Right cardiac atrium (tissue), 5 donors: ENCODE measurements at regions of chr19 and their contacts with region 1.

Region 1: GRCh38 chr19:850221-850978 is 1.7 kb upstream of the ELANE start:
- DNase-seq: peak; percentile 96 to 98 (median 97)
- ATAC-seq: peak; percentile 90 to 91
- H3K4me3 ChIP-seq: no peak overlapping the region
- H3K27ac ChIP-seq: peak overlapping the region; percentile 34
- H3K4me1 ChIP-seq: no peaks in the 10 kb centered on the region
- H3K27me3 ChIP-seq: no peaks in the 10 kb centered on the region

Region 2: DNA sequence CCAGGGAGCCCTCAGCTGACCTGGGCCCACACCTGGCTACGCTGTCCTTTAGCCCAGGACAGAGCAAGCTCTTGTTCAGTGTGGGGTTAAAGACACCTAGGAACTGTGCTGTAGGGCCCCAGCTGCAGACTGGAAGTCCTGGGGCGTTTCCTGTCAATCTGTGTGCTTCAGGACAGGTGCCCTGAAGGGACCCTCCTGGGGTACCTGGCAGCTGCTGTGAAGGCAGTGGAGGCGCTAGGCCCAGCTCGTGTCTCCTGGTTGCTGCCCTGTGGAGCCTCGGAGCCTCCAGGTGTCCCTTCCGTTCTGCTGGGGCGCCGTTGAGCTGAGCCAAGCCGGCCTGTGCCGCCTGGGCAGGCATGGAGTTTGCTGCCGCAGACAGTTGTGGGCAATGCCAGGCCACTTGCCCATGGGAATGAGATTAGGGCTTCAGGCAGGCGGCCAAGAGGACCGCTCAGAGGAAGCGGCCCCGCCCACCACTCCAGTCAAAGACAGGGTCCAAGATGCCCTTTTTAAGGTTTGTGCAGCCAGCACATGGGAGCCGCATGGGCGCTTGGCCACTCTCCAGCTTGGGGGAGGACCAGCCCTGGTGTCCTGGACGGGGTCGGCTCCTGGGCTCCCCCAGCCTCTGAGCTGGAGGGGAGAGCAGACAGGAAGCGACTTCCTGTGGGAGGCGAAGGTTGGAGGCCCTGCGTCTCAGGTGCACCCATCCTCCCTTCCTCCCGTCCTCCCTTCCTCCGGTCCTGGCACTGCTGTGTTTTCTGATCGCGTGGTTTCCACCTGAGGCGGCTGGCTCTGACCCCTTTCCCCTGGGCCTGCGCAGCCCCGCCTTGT is 49.2 kb before region 1 on chr19:
- intact Hi-C with region 1: loop called in 1 of 4 experiments (anchors 10 kb)
- DNase-seq: peak; percentile 89 to 94 (median 93)
- ATAC-seq: peak; percentile 2 to 17
- H3K4me3 ChIP-seq: peak overlapping the region; percentile 1
- H3K27ac ChIP-seq: peak overlapping the region; percentile 27
- H3K4me1 ChIP-seq: peaks cover 15% of the 10 kb centered on the region
- H3K27me3 ChIP-seq: no peaks in the 10 kb centered on the region

Region 3: GRCh38 chr19:907183-907853 is 56.9 kb after region 1 on chr19:
- intact Hi-C with region 1: no loop called
- DNase-seq: no peak
- ATAC-seq: peak in 1 of 2 donors; percentile 8
- H3K4me3 ChIP-seq: no peak overlapping the region
- H3K27ac ChIP-seq: no peak overlapping the region
- H3K4me1 ChIP-seq: no peaks in the 10 kb centered on the region
- H3K27me3 ChIP-seq: no peaks in the 10 kb centered on the region

Region 4: GRCh38 chr19:984165-984967 is 134.0 kb after region 1 on chr19 and contains the start of gene WDR18:
- intact Hi-C with region 1: no loop called
- DNase-seq: peak; percentile 95 to 98 (median 98)
- ATAC-seq: peak; percentile 95 to 96
- H3K4me3 ChIP-seq: peak within 1 kb of the TSS; percentile 92
- H3K27ac ChIP-seq: peak within 1 kb of the TSS; percentile 84
- H3K4me1 ChIP-seq: no peaks in the 10 kb centered on the region
- H3K27me3 ChIP-seq: no peaks in the 10 kb centered on the region
- total RNA-seq, gene WDR18: 12.2 to 24.0 (median 15.8) TPM